Tibial artery (tissue), 4 donors: ENCODE measurements at regions of chr2 and their contacts with region 1.

Region 1: GRCh38 chr2:69816923-69817542 is 12.4 kb upstream of the GMCL1 start:
- DNase-seq: peak; percentile 85 to 89
- H3K4me3 ChIP-seq: no peak overlapping the region
- H3K27ac ChIP-seq: no peak overlapping the region
- H3K4me1 ChIP-seq: peaks cover 0 to 3% (median 1%) of the 10 kb centered on the region in 4 donors
- H3K27me3 ChIP-seq: no peaks in the 10 kb centered on the region
- CTCF ChIP-seq: peak; percentile 88 to 98

Region 2: GRCh38 chr2:69559442-69560146 is 257.4 kb before region 1 on chr2:
- intact Hi-C with region 1: loop called (anchors 5 kb)
- DNase-seq: no peak
- H3K4me3 ChIP-seq: no peak overlapping the region
- H3K27ac ChIP-seq: no peak overlapping the region
- H3K4me1 ChIP-seq: peaks cover 0 to 16% (median 4%) of the 10 kb centered on the region in 4 donors
- H3K27me3 ChIP-seq: no peaks in the 10 kb centered on the region
- CTCF ChIP-seq: peak; percentile 62 to 71

Region 3: GRCh38 chr2:69725706-69726360 is 91.2 kb before region 1 on chr2:
- intact Hi-C with region 1: loop called (anchors 2 kb)
- DNase-seq: no peak
- H3K4me3 ChIP-seq: no peak overlapping the region
- H3K27ac ChIP-seq: no peak overlapping the region
- H3K4me1 ChIP-seq: peaks cover 0 to 3% (median 0%) of the 10 kb centered on the region in 4 donors
- H3K27me3 ChIP-seq: no peaks in the 10 kb centered on the region
- CTCF ChIP-seq: no peak

Region 4: GRCh38 chr2:70199326-70199864 is 382.4 kb after region 1 on chr2:
- intact Hi-C with region 1: no loop called
- DNase-seq: no peak
- H3K4me3 ChIP-seq: no peak overlapping the region
- H3K27ac ChIP-seq: no peak overlapping the region
- H3K4me1 ChIP-seq: no peaks in the 10 kb centered on the region
- H3K27me3 ChIP-seq: no peaks in the 10 kb centered on the region
- CTCF ChIP-seq: no peak